Activated CD4-positive, alpha-beta T cell treated with anti-CD3 and anti-CD28 coated beads for 36 hours (primary cell): ENCODE measurements at regions of chr4 and their contacts with region 1.

Region 1: GRCh38 chr4:173168396-173169177 is at the start of gene GALNT7:
- DNase-seq: peak; percentile 83
- ATAC-seq: peak; percentile 57
- H3K4me3 Mint-ChIP-seq: peak within 1 kb of the TSS; percentile 92
- H3K27ac Mint-ChIP-seq: peak within 1 kb of the TSS; percentile 89
- H3K4me1 Mint-ChIP-seq: peaks cover 42% of the 10 kb centered on the region
- H3K27me3 Mint-ChIP-seq: no peaks in the 10 kb centered on the region
- total RNA-seq, gene GALNT7: 11.4 to 15.1 TPM

Region 2: GRCh38 chr4:172919269-172919668 is 249.3 kb before region 1 on chr4:
- CTCF ChIA-PET with region 1: no interaction called
- POLR2A ChIA-PET with region 1: no interaction called
- intact Hi-C with region 1: no loop called
- DNase-seq: no peak
- ATAC-seq: no peak
- H3K4me3 Mint-ChIP-seq: no peak overlapping the region
- H3K27ac Mint-ChIP-seq: no peak overlapping the region
- H3K4me1 Mint-ChIP-seq: no peaks in the 10 kb centered on the region
- H3K27me3 Mint-ChIP-seq: peaks cover 2% of the 10 kb centered on the region

Region 3: GRCh38 chr4:173192375-173193162 is 24.0 kb after region 1 on chr4:
- CTCF ChIA-PET with region 1: interaction called, 3 read pairs
- POLR2A ChIA-PET with region 1: no interaction called
- intact Hi-C with region 1: loop called in 1 of 2 experiments (anchors 2 kb)
- DNase-seq: peak; percentile 12
- ATAC-seq: peak; percentile 28
- H3K4me3 Mint-ChIP-seq: no peak overlapping the region
- H3K27ac Mint-ChIP-seq: no peak overlapping the region
- H3K4me1 Mint-ChIP-seq: peaks cover 43% of the 10 kb centered on the region
- H3K27me3 Mint-ChIP-seq: no peaks in the 10 kb centered on the region

Region 4: GRCh38 chr4:173257732-173258717 is 89.4 kb after region 1 on chr4:
- CTCF ChIA-PET with region 1: interaction called, 8 read pairs
- POLR2A ChIA-PET with region 1: no interaction called
- intact Hi-C with region 1: loop called in 1 of 2 experiments (anchors 2 kb)
- DNase-seq: peak; percentile 76
- ATAC-seq: peak; percentile 94
- H3K4me3 Mint-ChIP-seq: no peak overlapping the region
- H3K27ac Mint-ChIP-seq: no peak overlapping the region
- H3K4me1 Mint-ChIP-seq: peaks cover 7% of the 10 kb centered on the region
- H3K27me3 Mint-ChIP-seq: no peaks in the 10 kb centered on the region

Region 5: DNA sequence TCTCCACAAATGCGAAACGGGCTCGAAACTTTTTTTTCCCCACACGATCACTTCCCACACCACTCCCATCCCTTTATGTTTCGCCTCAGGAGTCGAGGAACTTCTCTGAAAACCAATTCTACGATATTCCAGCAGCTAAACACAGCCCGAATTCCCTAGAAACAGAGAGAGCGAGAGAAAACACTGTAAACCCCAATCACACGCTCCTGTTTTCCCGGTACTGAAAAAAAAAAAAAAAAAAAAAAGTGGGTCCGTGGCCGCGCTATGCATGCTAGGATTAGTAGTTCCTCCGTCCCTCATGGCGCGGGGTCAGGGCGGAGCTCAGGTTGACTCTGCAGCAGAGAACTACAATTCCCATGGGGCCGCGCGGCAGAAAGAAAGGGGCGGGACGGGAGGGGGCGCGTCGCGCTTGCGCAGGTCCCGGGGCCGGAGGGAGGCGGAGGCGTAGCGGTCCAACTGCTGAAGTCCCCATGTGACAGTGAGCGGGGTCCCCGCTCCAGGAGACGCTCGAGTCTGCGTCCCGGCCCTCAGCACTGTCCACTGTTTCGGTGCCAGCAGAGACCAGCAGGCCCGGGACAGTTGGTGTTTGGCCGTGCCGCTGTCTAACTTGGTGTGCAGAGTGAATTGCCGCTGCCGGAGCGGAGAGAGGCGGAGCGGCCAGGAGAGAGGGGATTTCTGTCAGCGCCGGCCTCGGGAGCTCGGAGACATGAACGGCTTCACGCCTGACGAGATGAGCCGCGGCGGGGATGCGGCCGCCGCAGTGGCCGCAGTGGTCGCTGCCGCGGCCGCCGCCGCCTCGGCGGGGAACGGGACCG is 202.1 kb after region 1 on chr4 and contains the start of gene SAP30:
- CTCF ChIA-PET with region 1: no interaction called
- POLR2A ChIA-PET with region 1: no interaction called
- intact Hi-C with region 1: loop called (anchors 1 kb)
- DNase-seq: peak; percentile 99
- ATAC-seq: peak; percentile 88
- H3K4me3 Mint-ChIP-seq: peak within 1 kb of the TSS; percentile 93
- H3K27ac Mint-ChIP-seq: peak within 1 kb of the TSS; percentile 100
- H3K4me1 Mint-ChIP-seq: peaks cover 31% of the 10 kb centered on the region
- H3K27me3 Mint-ChIP-seq: peaks cover 8% of the 10 kb centered on the region
- total RNA-seq, gene SAP30: 22.0 to 29.3 TPM